ENCODE measurements at regions of chr17 and their contacts with region 1.

Region 1: DNA sequence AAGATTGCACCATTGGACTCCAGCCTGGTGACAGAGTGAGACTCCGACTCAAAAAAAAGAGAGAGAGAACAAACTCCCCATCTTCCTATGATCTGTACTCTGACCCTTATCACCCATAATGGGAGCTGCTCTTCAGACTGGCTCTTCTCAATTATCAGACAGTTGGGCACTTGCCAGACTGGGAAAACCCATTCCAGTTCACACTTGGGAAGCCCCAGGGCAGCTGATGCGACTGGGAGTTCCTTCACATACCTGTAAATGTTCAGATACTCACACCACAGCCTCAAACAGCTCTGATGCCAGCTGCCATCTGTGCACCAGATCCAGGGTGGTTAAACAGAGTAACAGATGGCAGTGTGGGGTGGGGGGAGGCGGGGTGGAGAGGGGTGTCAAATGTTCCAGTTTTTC is 23.8 kb upstream of the TMEM101 start:
- DNase-seq: peak; percentile 75 to 78
- ATAC-seq: peak; percentile 83 to 93
- H3K4me3 ChIP-seq: no peak overlapping the region
- H3K27ac ChIP-seq: peak overlapping the region; percentile 77 to 91 (median 84)
- H3K4me1 ChIP-seq: peaks cover 39 to 40% of the 10 kb centered on the region in 2 donors
- H3K27me3 ChIP-seq: no peaks in the 10 kb centered on the region
- CTCF ChIP-seq: no peak
- POLR2A ChIP-seq: no peak

Region 2: GRCh38 chr17:43940630-43941029 is 98.0 kb before region 1 on chr17:
- in situ Hi-C with region 1: loop called in 3 of 4 experiments (anchors 5 to 10 kb)
- intact Hi-C with region 1: loop called (anchors 1 kb)
- DNase-seq: no peak
- ATAC-seq: no peak
- H3K4me3 ChIP-seq: no peak overlapping the region
- H3K27ac ChIP-seq: no peak overlapping the region
- H3K4me1 ChIP-seq: peaks cover 0 to 7% of the 10 kb centered on the region in 2 donors
- H3K27me3 ChIP-seq: peaks cover 10 to 13% (median 13%) of the 10 kb centered on the region in 3 donors
- CTCF ChIP-seq: no peak
- POLR2A ChIP-seq: no peak

Region 3: DNA sequence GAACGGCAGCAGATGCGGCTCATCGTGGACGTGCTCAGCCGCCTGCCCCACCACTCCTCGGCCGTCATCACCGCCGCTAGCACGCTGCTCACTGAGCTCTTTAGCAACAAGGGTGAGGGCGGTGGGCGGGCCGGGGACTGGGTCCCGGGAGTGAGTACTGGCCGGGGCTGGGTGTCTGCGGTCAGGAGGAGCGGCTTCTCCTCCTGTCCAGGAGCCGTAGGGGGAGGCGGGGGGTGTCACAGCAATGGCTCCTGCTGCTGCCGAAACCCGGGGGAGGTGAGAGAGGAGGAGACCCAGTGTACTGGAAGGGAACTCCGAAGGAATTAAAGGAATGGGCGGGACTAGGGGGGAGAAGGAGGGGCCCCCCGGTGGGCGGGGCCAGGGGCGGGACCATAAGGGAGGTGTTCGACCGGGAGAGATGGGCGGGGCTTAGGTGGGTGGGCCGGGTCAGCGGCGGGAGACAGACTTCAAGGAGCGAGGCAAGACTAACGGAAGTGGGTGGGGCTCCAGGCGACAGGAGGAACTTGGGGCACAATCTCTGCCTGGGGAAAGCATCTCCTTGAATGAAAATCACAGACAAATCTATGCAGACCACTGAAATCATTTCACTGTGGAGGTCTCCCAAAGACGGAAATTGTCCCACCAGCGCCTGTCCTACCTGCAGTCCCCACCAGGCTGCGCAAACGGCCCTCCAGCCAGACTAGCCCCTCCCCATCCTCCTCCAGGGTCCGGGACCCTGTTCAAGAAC is 31.8 kb before region 1 on chr17:
- in situ Hi-C with region 1: no loop called
- intact Hi-C with region 1: loop called (anchors 2 kb)
- DNase-seq: peak; percentile 92 to 95
- ATAC-seq: peak; percentile 83 to 91
- H3K4me3 ChIP-seq: peak overlapping the region; percentile 52 to 71 (median 67)
- H3K27ac ChIP-seq: peak overlapping the region in 2 of 4 donors; percentile 32 to 66
- H3K4me1 ChIP-seq: peaks cover 15 to 28% of the 10 kb centered on the region in 2 donors
- H3K27me3 ChIP-seq: peaks cover 35 to 40% (median 40%) of the 10 kb centered on the region in 3 donors
- CTCF ChIP-seq: peak; percentile 18 to 73 (median 59)
- POLR2A ChIP-seq: peak; percentile 21 to 39

Region 4: DNA sequence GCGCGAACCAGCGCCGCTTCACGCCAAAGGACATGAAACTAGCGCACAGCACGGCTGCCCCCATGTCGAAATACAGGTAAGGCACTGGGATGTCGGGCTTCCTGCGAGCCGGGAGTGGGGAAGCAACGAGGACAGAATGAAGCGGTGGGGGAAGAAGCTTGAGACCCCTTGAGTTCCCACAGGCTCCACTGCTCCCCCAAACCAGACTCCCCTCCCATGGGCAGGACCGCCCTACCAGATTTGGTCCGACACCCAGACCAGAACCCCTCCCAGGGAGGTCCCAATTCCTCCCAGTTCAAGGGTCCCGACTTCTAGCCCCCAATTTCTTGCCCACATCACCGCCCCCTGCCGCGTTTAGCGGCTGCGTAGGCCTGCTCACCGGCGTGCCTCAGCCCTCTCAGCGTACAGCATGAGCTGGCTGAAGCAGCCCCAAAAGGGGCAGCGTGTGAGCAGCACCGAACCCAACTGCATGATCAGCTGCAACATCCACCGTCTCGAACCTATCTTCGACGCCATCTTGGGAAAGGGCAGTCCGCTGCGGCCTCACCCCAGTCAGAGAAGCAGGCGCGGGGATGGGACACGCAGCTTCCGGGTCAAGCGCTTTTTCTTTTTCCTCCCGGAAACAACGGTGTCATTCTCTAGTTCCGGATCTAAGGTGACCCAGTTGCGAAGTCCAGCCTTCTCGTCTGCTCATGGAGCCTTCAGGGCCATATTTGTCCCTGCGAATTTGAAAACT is 24.0 kb before region 1 on chr17 and contains the start of gene TMEM101:
- in situ Hi-C with region 1: no loop called
- intact Hi-C with region 1: loop called (anchors 2 kb)
- DNase-seq: peak; percentile 86 to 90
- ATAC-seq: peak; percentile 98 to 99
- H3K4me3 ChIP-seq: peak within 1 kb of the TSS; percentile 79 to 98 (median 86)
- H3K27ac ChIP-seq: peak within 1 kb of the TSS; percentile 71 to 87 (median 82)
- H3K4me1 ChIP-seq: peaks cover 8 to 9% of the 10 kb centered on the region in 2 donors
- H3K27me3 ChIP-seq: no peaks in the 10 kb centered on the region
- CTCF ChIP-seq: no peak
- POLR2A ChIP-seq: no peak
- total RNA-seq, gene TMEM101: 28.8 to 38.3 (median 36.4) TPM